Natural killer cell (primary cell): ENCODE measurements at regions of chr4 and their contacts with region 1.

Region 1: GRCh38 chr4:102760645-102761295 is at the start of gene MANBA:
- DNase-seq: peak; percentile 72 to 89
- ATAC-seq: peak; percentile 88 to 95 (median 90)
- H3K4me3 ChIP-seq: peak within 1 kb of the TSS; percentile 96
- H3K4me3 Mint-ChIP-seq: peak within 1 kb of the TSS; percentile 96
- H3K27ac ChIP-seq: peak within 1 kb of the TSS; percentile 95
- H3K27ac Mint-ChIP-seq: peak within 1 kb of the TSS; percentile 80 to 87
- H3K4me1 ChIP-seq: peaks cover 19% of the 10 kb centered on the region
- H3K4me1 Mint-ChIP-seq: peaks cover 35 to 36% of the 10 kb centered on the region in 2 donors
- H3K27me3 ChIP-seq: no peaks in the 10 kb centered on the region
- H3K27me3 Mint-ChIP-seq: peaks cover 3 to 6% of the 10 kb centered on the region in 2 donors
- CTCF ChIP-seq: no peak
- total RNA-seq, gene MANBA: 38.1 to 43.2 (median 40.8) TPM

Region 2: DNA sequence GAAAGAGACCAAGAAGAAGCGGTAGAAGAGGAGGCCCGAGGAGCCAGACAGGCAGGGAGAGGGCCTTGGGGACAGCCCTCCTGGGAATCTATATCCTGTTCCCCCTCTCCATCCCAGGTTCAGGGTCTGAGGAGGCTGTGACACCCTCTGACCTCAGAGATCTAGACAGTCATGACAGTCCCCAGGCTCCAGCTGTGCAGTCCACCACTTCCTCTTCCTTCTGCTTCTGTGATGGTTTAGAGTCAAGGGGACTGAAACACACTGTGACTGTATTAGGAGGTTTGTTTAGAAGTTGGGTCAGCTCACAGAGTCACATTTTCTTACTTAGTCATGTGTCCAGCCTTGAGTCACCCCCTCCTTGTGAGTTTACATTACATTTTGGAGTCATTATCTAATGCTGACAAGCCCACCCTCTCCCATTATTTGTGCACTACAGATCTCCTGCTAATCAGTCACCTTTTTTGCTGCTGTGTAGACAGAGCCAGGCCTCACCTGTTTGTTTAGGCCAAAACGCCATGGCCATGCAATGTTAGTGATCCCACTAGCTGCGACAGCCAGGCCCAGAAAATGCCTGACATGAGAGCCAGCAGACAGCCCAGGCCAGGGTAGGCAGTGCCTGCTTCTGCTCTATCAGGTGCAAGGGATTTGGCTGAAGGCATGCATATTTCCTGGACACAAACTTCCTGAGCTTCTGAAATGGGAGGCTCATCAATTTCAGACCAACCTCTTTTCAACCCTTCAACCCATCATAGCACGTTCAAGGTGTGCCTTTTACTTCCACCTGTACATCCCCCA is 26.0 kb before region 1 on chr4:
- intact Hi-C with region 1: loop called (anchors 1 kb)
- DNase-seq: peak; percentile 23 to 31
- ATAC-seq: peak; percentile 86 to 91 (median 87)
- H3K4me3 ChIP-seq: no peak overlapping the region
- H3K4me3 Mint-ChIP-seq: peak overlapping the region; percentile 68
- H3K27ac ChIP-seq: peak overlapping the region; percentile 83
- H3K27ac Mint-ChIP-seq: peak overlapping the region; percentile 95
- H3K4me1 ChIP-seq: peaks cover 14% of the 10 kb centered on the region
- H3K4me1 Mint-ChIP-seq: peaks cover 57 to 67% of the 10 kb centered on the region in 2 donors
- H3K27me3 ChIP-seq: no peaks in the 10 kb centered on the region
- H3K27me3 Mint-ChIP-seq: no peaks in the 10 kb centered on the region
- CTCF ChIP-seq: no peak

Region 3: DNA sequence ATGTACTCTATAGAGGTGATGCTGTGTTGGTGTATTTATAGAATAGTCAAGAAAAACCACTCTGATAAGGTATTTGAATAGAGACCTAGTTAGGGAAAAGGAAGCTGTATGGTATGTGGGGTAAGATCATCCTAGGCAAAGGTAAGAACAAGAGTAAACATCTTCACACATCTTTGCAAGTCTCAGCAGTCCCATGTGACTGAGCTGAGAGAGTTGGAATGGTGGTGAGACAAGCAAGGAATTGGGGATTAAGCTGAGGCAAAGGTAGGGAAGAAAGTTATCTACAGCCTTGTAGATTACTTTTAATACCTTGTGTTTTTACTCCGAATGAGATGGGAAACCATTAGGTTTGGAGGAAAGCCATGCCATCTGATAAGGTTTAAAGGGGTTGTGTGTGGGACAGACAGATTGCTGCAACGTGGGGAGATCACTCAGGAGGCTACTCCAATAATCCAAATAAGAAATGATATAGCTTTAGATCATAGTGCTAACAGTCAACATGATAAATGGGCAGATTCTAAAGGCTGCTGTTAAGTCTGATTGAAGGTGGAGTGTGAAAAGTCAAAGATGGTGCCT is 31.7 kb after region 1 on chr4:
- intact Hi-C with region 1: no loop called
- DNase-seq: no peak
- ATAC-seq: peak; percentile 17 to 46 (median 20)
- H3K4me3 ChIP-seq: no peak overlapping the region
- H3K4me3 Mint-ChIP-seq: no peak overlapping the region
- H3K27ac ChIP-seq: no peak overlapping the region
- H3K27ac Mint-ChIP-seq: peak overlapping the region; percentile 25 to 32
- H3K4me1 ChIP-seq: no peaks in the 10 kb centered on the region
- H3K4me1 Mint-ChIP-seq: peaks cover 18 to 36% of the 10 kb centered on the region in 2 donors
- H3K27me3 ChIP-seq: no peaks in the 10 kb centered on the region
- H3K27me3 Mint-ChIP-seq: no peaks in the 10 kb centered on the region
- CTCF ChIP-seq: no peak

Region 4: GRCh38 chr4:102868781-102869568 is 108.2 kb after region 1 on chr4 and contains the start of gene CISD2:
- intact Hi-C with region 1: loop called (anchors 1 kb)
- DNase-seq: peak; percentile 92 to 96
- ATAC-seq: peak; percentile 83 to 95 (median 87)
- H3K4me3 ChIP-seq: peak within 1 kb of the TSS; percentile 76
- H3K4me3 Mint-ChIP-seq: peak within 1 kb of the TSS; percentile 93
- H3K27ac ChIP-seq: peak within 1 kb of the TSS; percentile 96
- H3K27ac Mint-ChIP-seq: peak within 1 kb of the TSS; percentile 97 to 99
- H3K4me1 ChIP-seq: peaks cover 16% of the 10 kb centered on the region
- H3K4me1 Mint-ChIP-seq: peaks cover 19 to 24% of the 10 kb centered on the region in 2 donors
- H3K27me3 ChIP-seq: no peaks in the 10 kb centered on the region
- H3K27me3 Mint-ChIP-seq: no peaks in the 10 kb centered on the region
- CTCF ChIP-seq: no peak
- total RNA-seq, gene CISD2: 11.2 to 13.8 (median 13.5) TPM